ENCODE measurements at regions of chr4 and their contacts with region 1.

Region 1: DNA sequence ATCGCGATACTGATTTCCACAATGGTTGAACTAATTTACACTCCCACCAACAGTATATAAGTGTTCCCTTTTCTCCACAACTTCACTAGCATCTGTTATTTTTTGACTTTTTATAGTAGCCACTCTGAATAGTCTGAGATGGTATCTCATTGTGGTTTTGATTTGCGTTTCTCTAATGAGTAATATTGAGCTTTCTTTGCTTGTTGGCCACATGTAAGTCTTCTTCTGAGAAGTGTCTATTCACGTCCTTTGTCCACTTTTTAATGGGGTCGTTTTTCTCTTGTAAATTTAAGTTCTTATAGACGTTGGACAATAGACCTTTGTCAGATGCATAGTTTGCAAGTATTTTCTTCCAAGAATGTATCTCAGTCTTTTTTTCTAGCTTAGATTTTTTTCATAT is 10.0 kb downstream of the FBXW7 start:
- DNase-seq: no peak
- H3K4me3 ChIP-seq: no peak overlapping the region
- H3K4me3 Mint-ChIP-seq: peak overlapping the region in 1 of 8 donors; percentile 7
- H3K27ac ChIP-seq: no peak overlapping the region
- H3K27ac Mint-ChIP-seq: no peak overlapping the region
- H3K4me1 ChIP-seq: peaks cover 74% of the 10 kb centered on the region
- H3K4me1 Mint-ChIP-seq: peaks cover 53 to 75% (median 64%) of the 10 kb centered on the region in 4 donors
- H3K27me3 ChIP-seq: no peaks in the 10 kb centered on the region
- H3K27me3 Mint-ChIP-seq: no peaks in the 10 kb centered on the region

Region 2: GRCh38 chr4:152510349-152511147 is 15.3 kb before region 1 on chr4:
- CTCF ChIA-PET with region 1: no interaction called
- POLR2A ChIA-PET with region 1: interaction called, 4 read pairs
- intact Hi-C with region 1: loop called (anchors 2 kb)
- DNase-seq: peak in 1 of 5 donors; percentile 6
- H3K4me3 ChIP-seq: no peak overlapping the region
- H3K4me3 Mint-ChIP-seq: peak overlapping the region; percentile 68 to 89 (median 76)
- H3K27ac ChIP-seq: peak overlapping the region; percentile 15
- H3K27ac Mint-ChIP-seq: peak overlapping the region; percentile 62 to 90 (median 72)
- H3K4me1 ChIP-seq: peaks cover 44% of the 10 kb centered on the region
- H3K4me1 Mint-ChIP-seq: peaks cover 44 to 72% (median 61%) of the 10 kb centered on the region in 4 donors
- H3K27me3 ChIP-seq: no peaks in the 10 kb centered on the region
- H3K27me3 Mint-ChIP-seq: no peaks in the 10 kb centered on the region

Region 3: GRCh38 chr4:153153339-153153871 is 627.5 kb after region 1 on chr4:
- CTCF ChIA-PET with region 1: no interaction called
- POLR2A ChIA-PET with region 1: no interaction called
- intact Hi-C with region 1: no loop called
- DNase-seq: peak; percentile 76 to 90 (median 81)
- H3K4me3 ChIP-seq: peak overlapping the region; percentile 7 to 75
- H3K4me3 Mint-ChIP-seq: peak overlapping the region; percentile 89 to 96 (median 91)
- H3K27ac ChIP-seq: peak overlapping the region; percentile 67
- H3K27ac Mint-ChIP-seq: peak overlapping the region; percentile 85 to 95 (median 93)
- H3K4me1 ChIP-seq: peaks cover 30% of the 10 kb centered on the region
- H3K4me1 Mint-ChIP-seq: peaks cover 14 to 47% (median 29%) of the 10 kb centered on the region in 4 donors
- H3K27me3 ChIP-seq: no peaks in the 10 kb centered on the region
- H3K27me3 Mint-ChIP-seq: no peaks in the 10 kb centered on the region